Activated CD4-positive, alpha-beta T cell treated with anti-CD3 and anti-CD28 coated beads for 36 hours (primary cell): ENCODE measurements at regions of chr3 and their contacts with region 1.

Region 1: DNA sequence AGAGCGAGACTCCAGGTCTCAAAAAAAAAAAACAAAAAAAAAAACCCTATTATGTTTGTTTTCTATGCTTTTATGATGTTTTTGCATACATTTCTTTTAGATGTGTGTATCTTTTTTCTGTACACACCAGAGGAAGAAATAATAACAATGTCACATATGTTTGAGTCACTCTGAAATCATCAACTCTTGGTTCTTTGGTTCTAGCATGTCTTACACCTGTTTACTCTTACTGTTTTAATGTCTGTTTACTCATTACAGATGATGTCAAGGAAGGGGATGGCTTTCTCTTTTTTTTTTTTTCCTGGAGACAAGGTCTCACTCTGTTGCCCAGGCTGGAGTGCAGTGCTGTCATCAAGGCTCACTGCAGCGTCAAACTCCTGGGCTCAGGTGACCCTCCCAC is 24.1 kb downstream of the RHOA start:
- DNase-seq: no peak
- ATAC-seq: peak; percentile 74
- H3K4me3 Mint-ChIP-seq: no peak overlapping the region
- H3K27ac Mint-ChIP-seq: peak overlapping the region; percentile 44
- H3K4me1 Mint-ChIP-seq: peaks cover 52% of the 10 kb centered on the region
- H3K27me3 Mint-ChIP-seq: no peaks in the 10 kb centered on the region

Region 2: GRCh38 chr3:47542471-47543173 is 1845.1 kb before region 1 on chr3:
- CTCF ChIA-PET with region 1: no interaction called
- POLR2A ChIA-PET with region 1: interaction called, 14 read pairs
- intact Hi-C with region 1: no loop called
- DNase-seq: no peak
- ATAC-seq: no peak
- H3K4me3 Mint-ChIP-seq: no peak overlapping the region
- H3K27ac Mint-ChIP-seq: no peak overlapping the region
- H3K4me1 Mint-ChIP-seq: no peaks in the 10 kb centered on the region
- H3K27me3 Mint-ChIP-seq: no peaks in the 10 kb centered on the region